Activated CD8-positive, alpha-beta T cell treated with anti-CD3 and anti-CD28 coated beads, Interleukin-2, amount 10 ng/mL, durations not matched to agents 7 days and 5 days (primary cell): ENCODE measurements at regions of chr2 and their contacts with region 1.

Region 1: GRCh38 chr2:194411221-194411620 is 1245.8 kb upstream of the SLC39A10 start:
- DNase-seq: no peak
- ATAC-seq: no peak
- H3K4me3 Mint-ChIP-seq: no peak overlapping the region
- H3K27ac Mint-ChIP-seq: no peak overlapping the region
- H3K4me1 Mint-ChIP-seq: no peaks in the 10 kb centered on the region
- H3K27me3 Mint-ChIP-seq: no peaks in the 10 kb centered on the region

Region 2: DNA sequence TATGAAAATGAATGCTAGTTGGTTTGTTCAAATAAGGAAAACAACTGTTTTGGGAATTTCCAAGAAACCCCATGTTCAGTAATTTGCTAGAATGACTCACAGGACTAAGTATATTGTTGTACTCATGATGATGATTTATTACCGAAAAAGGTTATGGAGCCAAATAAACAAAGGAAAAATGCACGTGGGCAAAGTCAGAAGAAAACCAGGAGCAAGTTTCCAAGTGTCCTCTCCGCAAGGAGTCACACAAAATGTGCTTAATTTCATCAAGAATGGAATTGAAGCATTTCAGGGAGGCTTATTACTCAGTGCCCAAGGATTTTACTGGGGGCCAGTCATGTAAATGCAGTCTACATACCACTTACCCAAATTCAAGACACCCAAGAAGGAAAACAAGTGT is 564.1 kb before region 1 on chr2:
- CTCF ChIA-PET with region 1: no interaction called
- POLR2A ChIA-PET with region 1: no interaction called
- DNase-seq: no peak
- ATAC-seq: no peak
- H3K4me3 Mint-ChIP-seq: no peak overlapping the region
- H3K27ac Mint-ChIP-seq: no peak overlapping the region
- H3K4me1 Mint-ChIP-seq: no peaks in the 10 kb centered on the region
- H3K27me3 Mint-ChIP-seq: no peaks in the 10 kb centered on the region

Region 3: GRCh38 chr2:194363295-194363694 is 47.9 kb before region 1 on chr2:
- CTCF ChIA-PET with region 1: no interaction called
- POLR2A ChIA-PET with region 1: interaction called, 10 read pairs
- DNase-seq: no peak
- ATAC-seq: no peak
- H3K4me3 Mint-ChIP-seq: no peak overlapping the region
- H3K27ac Mint-ChIP-seq: no peak overlapping the region
- H3K4me1 Mint-ChIP-seq: no peaks in the 10 kb centered on the region
- H3K27me3 Mint-ChIP-seq: no peaks in the 10 kb centered on the region

Region 4: GRCh38 chr2:194494401-194494800 is 83.2 kb after region 1 on chr2:
- CTCF ChIA-PET with region 1: no interaction called
- POLR2A ChIA-PET with region 1: no interaction called
- DNase-seq: no peak
- ATAC-seq: no peak
- H3K4me3 Mint-ChIP-seq: no peak overlapping the region
- H3K27ac Mint-ChIP-seq: no peak overlapping the region
- H3K4me1 Mint-ChIP-seq: no peaks in the 10 kb centered on the region
- H3K27me3 Mint-ChIP-seq: no peaks in the 10 kb centered on the region

Region 5: DNA sequence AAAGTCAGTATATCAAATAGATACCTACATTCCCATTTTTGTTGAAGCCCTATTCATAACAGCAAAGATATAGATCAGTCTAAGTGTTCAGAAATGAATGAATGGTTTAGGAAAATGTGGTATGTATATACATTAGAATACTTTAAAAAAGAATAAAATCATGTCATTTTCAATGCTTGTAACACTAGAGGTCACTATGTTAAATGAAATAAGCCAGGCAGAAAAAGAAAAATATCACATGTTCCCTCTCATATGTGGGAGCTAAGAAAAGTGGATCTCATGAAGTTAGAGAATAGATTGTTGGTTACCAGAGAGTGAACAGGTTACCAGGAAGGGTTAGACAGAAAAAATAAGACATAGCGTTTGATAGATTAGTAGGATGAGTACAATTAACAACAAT is 134.8 kb after region 1 on chr2:
- CTCF ChIA-PET with region 1: no interaction called
- POLR2A ChIA-PET with region 1: no interaction called
- DNase-seq: no peak
- ATAC-seq: no peak
- H3K4me3 Mint-ChIP-seq: no peak overlapping the region
- H3K27ac Mint-ChIP-seq: no peak overlapping the region
- H3K4me1 Mint-ChIP-seq: no peaks in the 10 kb centered on the region
- H3K27me3 Mint-ChIP-seq: no peaks in the 10 kb centered on the region

Region 6: GRCh38 chr2:194686569-194686968 is 275.3 kb after region 1 on chr2:
- CTCF ChIA-PET with region 1: no interaction called
- POLR2A ChIA-PET with region 1: no interaction called
- DNase-seq: no peak
- ATAC-seq: no peak
- H3K4me3 Mint-ChIP-seq: no peak overlapping the region
- H3K27ac Mint-ChIP-seq: no peak overlapping the region
- H3K4me1 Mint-ChIP-seq: no peaks in the 10 kb centered on the region
- H3K27me3 Mint-ChIP-seq: no peaks in the 10 kb centered on the region